Right ventricle myocardium superior (tissue), 1 donor: ENCODE measurements at regions of chr7 and their contacts with region 1.

Region 1: DNA sequence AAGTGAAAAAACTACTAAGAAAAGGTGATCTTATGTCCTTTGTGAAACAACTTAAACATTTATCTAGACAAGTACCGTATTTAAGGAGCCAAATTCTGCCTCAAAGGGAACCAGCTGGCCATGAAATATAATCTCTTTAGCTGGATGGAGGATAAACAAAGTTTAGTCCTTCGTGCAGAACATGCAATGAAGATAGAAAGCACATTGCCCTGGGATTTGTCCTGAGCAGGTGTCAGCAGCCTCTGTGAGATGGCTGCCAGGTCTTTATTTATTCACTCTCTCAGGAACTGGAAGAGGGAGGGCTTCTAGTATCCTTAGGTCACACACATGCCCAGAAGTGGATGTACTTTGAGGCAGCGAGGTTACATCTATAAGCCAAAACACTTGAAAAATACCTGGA is 57.4 kb upstream of the CASD1 start:
- DNase-seq: no peak
- ATAC-seq: peak; percentile 92

Region 2: GRCh38 chr7:94657771-94658693 is 205.8 kb after region 1 on chr7:
- intact Hi-C with region 1: loop called (anchors 10 kb)
- DNase-seq: peak; percentile 96
- ATAC-seq: peak; percentile 89